ENCODE measurements at regions of chr12 and their contacts with region 1.

Region 1: GRCh38 chr12:8697476-8698131 is at the start of gene RIMKLB:
- DNase-seq: peak; percentile 80
- H3K4me3 ChIP-seq: peak within 1 kb of the TSS; percentile 78 to 96 (median 88)
- H3K27ac ChIP-seq: peak within 1 kb of the TSS; percentile 85 to 96 (median 94)
- H3K4me1 ChIP-seq: peaks cover 5 to 33% (median 9%) of the 10 kb centered on the region in 4 donors
- H3K27me3 ChIP-seq: no peaks in the 10 kb centered on the region
- CTCF ChIP-seq: no peak
- EP300 ChIP-seq: no peak
- POLR2A ChIP-seq: peak; percentile 50
- total RNA-seq, gene RIMKLB: 2.0 to 20.8 (median 7.2) TPM

Region 2: DNA sequence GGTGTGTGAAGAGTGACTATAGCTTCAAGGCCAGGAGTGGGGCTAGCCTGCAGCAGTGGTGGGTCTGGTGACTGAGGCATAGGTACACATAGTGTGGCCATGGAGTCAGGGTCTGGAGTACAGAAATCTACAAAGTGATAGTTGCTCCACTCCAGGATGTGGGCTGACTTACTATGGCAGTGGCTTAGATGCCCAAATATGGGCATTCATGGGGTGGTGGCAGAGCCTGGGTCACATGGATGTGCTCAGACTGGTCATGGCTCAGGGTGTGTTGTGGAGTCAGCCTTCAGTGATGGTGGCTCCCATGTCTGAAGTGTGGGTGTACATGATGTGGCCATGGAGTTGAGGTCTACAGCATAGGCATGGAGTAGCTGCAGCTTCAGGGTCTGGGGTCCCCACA is 214.5 kb before region 1 on chr12:
- in situ Hi-C with region 1: no loop called
- intact Hi-C with region 1: no loop called
- DNase-seq: no peak
- H3K4me3 ChIP-seq: no peak overlapping the region
- H3K27ac ChIP-seq: no peak overlapping the region
- H3K4me1 ChIP-seq: no peaks in the 10 kb centered on the region
- H3K27me3 ChIP-seq: no peaks in the 10 kb centered on the region
- CTCF ChIP-seq: no peak
- EP300 ChIP-seq: no peak
- POLR2A ChIP-seq: no peak

Region 3: GRCh38 chr12:8609061-8609570 is 88.5 kb before region 1 on chr12:
- in situ Hi-C with region 1: no loop called
- intact Hi-C with region 1: no loop called
- DNase-seq: no peak
- H3K4me3 ChIP-seq: no peak overlapping the region
- H3K27ac ChIP-seq: no peak overlapping the region
- H3K4me1 ChIP-seq: no peaks in the 10 kb centered on the region
- H3K27me3 ChIP-seq: no peaks in the 10 kb centered on the region
- CTCF ChIP-seq: peak; percentile 29 to 52 (median 41)
- EP300 ChIP-seq: no peak
- POLR2A ChIP-seq: no peak

Region 4: DNA sequence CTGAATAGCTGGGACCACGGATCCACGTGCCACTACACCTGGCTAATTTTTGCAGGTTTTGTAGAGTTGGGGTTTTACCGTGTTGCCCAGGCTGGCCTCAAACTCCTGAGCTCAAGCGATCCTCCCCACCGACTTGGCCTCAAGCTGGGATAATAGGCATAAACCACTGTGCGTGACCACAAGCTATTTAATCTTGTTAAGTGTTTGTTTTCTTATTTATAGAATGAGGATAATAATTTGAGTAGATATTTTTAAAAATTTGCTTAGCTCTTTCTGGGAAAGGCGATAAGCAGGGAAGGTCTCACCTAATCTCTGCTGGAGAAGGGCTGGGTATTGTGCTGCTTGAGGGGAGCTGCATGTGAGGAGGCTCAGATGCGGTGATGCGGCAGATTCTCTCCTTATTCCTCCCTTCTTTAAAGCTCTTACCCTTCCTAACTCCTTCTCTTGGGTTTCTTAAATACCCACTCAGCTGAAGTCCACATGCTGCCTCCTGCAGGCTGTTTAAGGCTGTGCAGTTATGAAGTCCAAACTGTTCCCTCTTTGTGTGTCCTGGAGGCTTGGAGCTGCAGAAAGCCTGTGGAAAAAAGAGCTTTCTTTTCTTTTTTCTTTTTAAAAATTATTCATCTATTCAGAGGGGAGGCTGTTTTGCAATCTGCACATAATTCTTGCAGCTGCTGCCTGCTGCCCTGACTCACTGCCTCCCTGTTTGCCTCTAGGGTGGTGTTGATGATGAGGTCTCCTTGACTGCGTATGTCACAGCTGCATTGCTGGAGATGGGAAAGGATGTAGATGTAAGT is 162.8 kb after region 1 on chr12:
- in situ Hi-C with region 1: loop called in 1 of 4 experiments (anchors 25 kb)
- intact Hi-C with region 1: no loop called
- DNase-seq: peak; percentile 31
- H3K4me3 ChIP-seq: no peak overlapping the region
- H3K27ac ChIP-seq: no peak overlapping the region
- H3K4me1 ChIP-seq: no peaks in the 10 kb centered on the region
- H3K27me3 ChIP-seq: no peaks in the 10 kb centered on the region
- CTCF ChIP-seq: peak; percentile 38 to 54 (median 48)
- EP300 ChIP-seq: no peak
- POLR2A ChIP-seq: no peak

Region 5: GRCh38 chr12:8890313-8891085 is 192.9 kb after region 1 on chr12:
- in situ Hi-C with region 1: loop called in 2 of 4 experiments (anchors 25 kb)
- intact Hi-C with region 1: no loop called
- DNase-seq: peak; percentile 49
- H3K4me3 ChIP-seq: peak overlapping the region; percentile 1 to 52 (median 31)
- H3K27ac ChIP-seq: peak overlapping the region in 1 of 4 donors; percentile 40
- H3K4me1 ChIP-seq: peaks cover 0 to 4% (median 0%) of the 10 kb centered on the region in 4 donors
- H3K27me3 ChIP-seq: no peaks in the 10 kb centered on the region
- CTCF ChIP-seq: peak; percentile 72 to 89 (median 85)
- EP300 ChIP-seq: no peak
- POLR2A ChIP-seq: no peak

Region 6: GRCh38 chr12:9039397-9039977 is 341.9 kb after region 1 on chr12:
- in situ Hi-C with region 1: loop called in 2 of 4 experiments (anchors 25 kb)
- intact Hi-C with region 1: no loop called
- DNase-seq: no peak
- H3K4me3 ChIP-seq: no peak overlapping the region
- H3K27ac ChIP-seq: no peak overlapping the region
- H3K4me1 ChIP-seq: no peaks in the 10 kb centered on the region
- H3K27me3 ChIP-seq: no peaks in the 10 kb centered on the region
- CTCF ChIP-seq: peak; percentile 59 to 69 (median 67)
- EP300 ChIP-seq: no peak
- POLR2A ChIP-seq: no peak

Region 7: GRCh38 chr12:9064201-9064814 is 366.7 kb after region 1 on chr12:
- in situ Hi-C with region 1: loop called in 1 of 4 experiments (anchors 25 kb)
- intact Hi-C with region 1: no loop called
- DNase-seq: peak; percentile 67
- H3K4me3 ChIP-seq: peak overlapping the region; percentile 71 to 85 (median 73)
- H3K27ac ChIP-seq: peak overlapping the region; percentile 91 to 94 (median 93)
- H3K4me1 ChIP-seq: peaks cover 5 to 14% (median 6%) of the 10 kb centered on the region in 4 donors
- H3K27me3 ChIP-seq: no peaks in the 10 kb centered on the region
- CTCF ChIP-seq: peak; percentile 8 to 40 (median 22)
- EP300 ChIP-seq: no peak
- POLR2A ChIP-seq: no peak